ENCODE measurements at regions of chr17 and their contacts with region 1.

Region 1: DNA sequence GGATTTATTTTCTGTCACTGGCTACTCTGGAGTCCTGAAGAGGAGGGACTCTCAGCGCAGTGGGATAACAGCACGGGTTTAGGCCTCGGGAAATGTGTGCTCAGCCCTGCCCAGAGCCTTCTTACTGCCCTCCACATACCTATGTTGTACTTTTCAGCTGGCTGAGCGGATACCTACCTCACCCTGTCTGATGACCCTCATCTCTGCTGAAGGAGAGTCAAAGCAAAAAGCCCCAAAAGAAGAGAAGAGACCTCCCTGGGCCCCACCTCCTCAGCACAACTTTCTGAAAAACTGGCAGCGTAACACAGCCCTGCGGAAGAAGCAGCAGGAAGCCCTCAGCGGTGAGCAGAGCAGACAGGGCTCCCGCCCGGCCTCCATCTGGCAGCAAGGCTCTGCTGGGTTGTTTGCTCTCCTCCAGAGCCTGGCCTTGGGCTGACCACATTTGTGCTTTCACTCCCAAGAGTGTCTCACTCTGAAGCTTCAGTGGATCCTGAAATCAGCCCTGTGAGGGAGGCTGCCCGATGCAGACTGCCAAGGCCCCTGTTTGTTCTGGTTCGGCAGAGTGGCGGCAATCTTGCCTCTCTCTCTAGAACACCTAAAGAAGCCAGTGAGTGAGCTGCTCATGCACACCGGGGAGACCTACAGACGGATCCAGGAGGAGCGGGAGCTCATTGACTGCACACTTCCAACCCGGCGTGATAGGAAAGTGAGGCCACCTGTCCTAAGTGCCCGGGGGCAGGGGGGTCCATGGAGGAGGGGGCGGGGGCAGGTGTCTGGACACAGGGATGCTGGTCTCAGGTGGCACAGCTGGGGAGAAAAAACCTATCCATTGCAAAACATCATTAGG is 10.4 kb downstream of the MYCBPAP start:
- DNase-seq: peak; percentile 68
- ATAC-seq: peak; percentile 90
- H3K4me3 ChIP-seq: peak overlapping the region; percentile 21 to 68 (median 40)
- H3K27ac ChIP-seq: no peak overlapping the region
- H3K4me1 ChIP-seq: peaks cover 59% of the 10 kb centered on the region
- H3K27me3 ChIP-seq: no peaks in the 10 kb centered on the region
- CTCF ChIP-seq: no peak
- EP300 ChIP-seq: peak in 1 of 2 experiments; percentile 21; a peak in 1 of 4 replicates
- POLR2A ChIP-seq: no peak; a peak in 1 of 4 replicates
- RAD21 ChIP-seq: 0 out of 2 replicates have a peak, but pooled peaks have one; percentile 32

Region 2: GRCh38 chr17:50507871-50508572 is 10.6 kb before region 1 on chr17 and contains the start of gene MYCBPAP:
- CTCF ChIA-PET with region 1: no interaction called
- POLR2A ChIA-PET with region 1: interaction called, 13 read pairs
- in situ Hi-C with region 1: no loop called
- intact Hi-C with region 1: no loop called
- DNase-seq: no peak
- ATAC-seq: no peak
- H3K4me3 ChIP-seq: no peak within 1 kb of the TSS
- H3K27ac ChIP-seq: no peak within 1 kb of the TSS
- H3K4me1 ChIP-seq: peaks cover 46% of the 10 kb centered on the region
- H3K27me3 ChIP-seq: peaks cover 0 to 8% of the 10 kb centered on the region in 2 experiments; a peak in 2 of 5 replicates
- CTCF ChIP-seq: no peak
- EP300 ChIP-seq: no peak
- POLR2A ChIP-seq: no peak
- RAD21 ChIP-seq: no peak
- total RNA-seq, gene MYCBPAP: 0.24 and 0.36 TPM in 2 replicates

Region 3: DNA sequence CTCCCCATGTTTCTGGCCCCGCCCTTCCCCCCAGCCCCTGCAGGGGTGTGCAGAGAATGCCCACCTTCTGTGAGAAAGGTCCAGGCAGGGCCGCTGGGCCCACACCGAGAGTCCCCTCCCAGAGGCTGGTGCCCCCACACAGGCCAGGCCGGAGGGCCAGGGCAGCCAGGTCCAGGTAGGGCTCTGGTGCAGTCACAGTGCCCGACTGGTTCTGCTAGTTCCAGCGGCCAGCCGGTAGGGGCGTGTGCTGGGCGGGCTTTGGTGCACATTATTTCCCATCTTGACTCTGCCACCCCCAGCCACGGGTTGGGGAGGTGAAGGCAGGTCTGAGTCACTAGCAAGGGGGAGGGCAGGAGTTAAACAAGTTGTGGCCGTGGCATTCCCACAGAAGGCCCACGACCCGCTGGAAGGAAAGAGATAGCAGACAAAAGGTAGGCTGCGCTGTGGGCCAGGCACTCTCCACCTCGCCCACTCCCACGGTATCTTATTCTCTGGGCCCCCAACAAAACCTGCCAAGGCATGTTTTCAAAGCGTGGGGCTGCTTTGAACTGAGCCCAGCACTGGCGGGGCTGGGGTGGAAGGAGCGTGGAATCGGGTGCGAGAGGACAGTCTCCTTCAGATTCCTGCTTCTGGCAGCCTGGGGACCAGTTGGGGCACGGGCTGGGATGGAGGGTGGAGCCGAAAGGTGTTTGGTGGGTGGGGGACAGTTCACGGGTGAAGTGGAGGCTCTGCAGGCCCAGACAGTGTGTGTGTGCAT is 15.8 kb after region 1 on chr17:
- CTCF ChIA-PET with region 1: no interaction called
- POLR2A ChIA-PET with region 1: interaction called, 14 read pairs
- in situ Hi-C with region 1: no loop called
- intact Hi-C with region 1: no loop called
- DNase-seq: no peak
- ATAC-seq: peak; percentile 68
- H3K4me3 ChIP-seq: no peak overlapping the region; a peak in 1 of 6 replicates
- H3K27ac ChIP-seq: no peak overlapping the region
- H3K4me1 ChIP-seq: peaks cover 72% of the 10 kb centered on the region
- H3K27me3 ChIP-seq: peaks cover 5 to 33% of the 10 kb centered on the region in 2 experiments; a peak in 4 of 5 replicates
- CTCF ChIP-seq: peak; percentile 50
- EP300 ChIP-seq: no peak
- POLR2A ChIP-seq: no peak
- RAD21 ChIP-seq: no peak